Posterior cingulate gyrus (tissue), 11 donors: ENCODE measurements at regions of chr4 and their contacts with region 1.

Region 1: GRCh38 chr4:93791570-93792195 is 36.9 kb upstream of the ATOH1 start:
- DNase-seq: peak in 6 of 10 donors; percentile 49 to 78 (median 66)

Region 2: GRCh38 chr4:94127707-94128328 is 336.1 kb after region 1 on chr4:
- intact Hi-C with region 1: loop called (anchors 5 kb)
- DNase-seq: no peak

Region 3: GRCh38 chr4:94256828-94257227 is 465.1 kb after region 1 on chr4:
- intact Hi-C with region 1: loop called (anchors 5 kb)
- DNase-seq: no peak

Region 4: GRCh38 chr4:94399721-94400120 is 608.0 kb after region 1 on chr4:
- intact Hi-C with region 1: loop called (anchors 5 kb)
- DNase-seq: no peak

Region 5: GRCh38 chr4:94595879-94596483 is 804.3 kb after region 1 on chr4:
- intact Hi-C with region 1: loop called (anchors 10 kb)
- DNase-seq: no peak